IMR-90 (cell line): ENCODE measurements at regions of chr7 and their contacts with region 1.

Region 1: GRCh38 chr7:66140924-66141323 is 26.3 kb downstream of the CRCP start:
- DNase-seq: peak; percentile 84
- ATAC-seq: peak; percentile 72
- H3K4me3 ChIP-seq: no peak overlapping the region
- H3K27ac ChIP-seq: no peak overlapping the region; the same call in 1 of the 2 replicates
- H3K4me1 ChIP-seq: peaks cover 26% of the 10 kb centered on the region
- H3K27me3 ChIP-seq: no peaks in the 10 kb centered on the region
- CTCF ChIP-seq: peak; percentile 79
- POLR2A ChIP-seq: no peak
- RAD21 ChIP-seq: peak; percentile 85

Region 2: GRCh38 chr7:66152371-66153191 is 11.7 kb after region 1 on chr7:
- CTCF ChIA-PET with region 1: no interaction called
- POLR2A ChIA-PET with region 1: no interaction called
- dilution Hi-C with region 1: no loop called
- in situ Hi-C with region 1: no loop called
- intact Hi-C with region 1: no loop called
- DNase-seq: peak; percentile 87
- ATAC-seq: peak; percentile 77
- H3K4me3 ChIP-seq: no peak overlapping the region
- H3K27ac ChIP-seq: peak overlapping the region; percentile 88
- H3K4me1 ChIP-seq: peaks cover 25% of the 10 kb centered on the region
- H3K27me3 ChIP-seq: no peaks in the 10 kb centered on the region
- CTCF ChIP-seq: no peak
- POLR2A ChIP-seq: no peak
- RAD21 ChIP-seq: no peak

Region 3: GRCh38 chr7:66163186-66163610 is 22.3 kb after region 1 on chr7:
- CTCF ChIA-PET with region 1: no interaction called
- POLR2A ChIA-PET with region 1: no interaction called
- dilution Hi-C with region 1: no loop called
- in situ Hi-C with region 1: no loop called
- intact Hi-C with region 1: no loop called
- DNase-seq: no peak
- ATAC-seq: no peak
- H3K4me3 ChIP-seq: no peak overlapping the region
- H3K27ac ChIP-seq: no peak overlapping the region
- H3K4me1 ChIP-seq: peaks cover 6% of the 10 kb centered on the region
- H3K27me3 ChIP-seq: no peaks in the 10 kb centered on the region
- CTCF ChIP-seq: no peak
- POLR2A ChIP-seq: no peak
- RAD21 ChIP-seq: no peak

Region 4: DNA sequence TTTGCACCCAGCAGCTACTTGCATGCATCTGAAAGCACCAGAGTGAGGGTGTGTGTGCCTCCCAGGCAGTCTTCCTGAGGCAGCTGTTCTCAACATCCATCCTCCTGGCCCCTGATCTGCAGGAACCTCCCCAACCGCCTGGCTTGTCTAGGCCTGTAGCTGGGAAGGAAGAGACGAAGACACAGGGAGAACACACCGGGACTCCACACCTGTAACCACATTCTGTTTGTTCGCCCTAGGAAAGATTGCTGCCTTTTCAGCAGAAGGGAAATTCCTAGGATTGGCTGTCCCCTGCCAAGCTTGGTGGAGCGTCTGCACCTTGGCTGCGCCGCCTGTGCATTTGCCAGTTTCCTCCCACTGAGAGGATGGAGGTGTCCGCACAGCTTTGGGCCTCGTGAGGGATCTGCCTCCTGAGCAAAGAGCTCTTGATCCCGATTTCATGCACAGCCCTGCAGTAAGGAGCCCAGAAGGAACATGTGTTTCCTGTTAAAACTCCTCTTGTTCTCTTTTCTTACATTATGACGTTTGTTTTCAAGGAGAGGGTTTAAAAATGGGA is 218.8 kb after region 1 on chr7:
- CTCF ChIA-PET with region 1: no interaction called
- POLR2A ChIA-PET with region 1: no interaction called
- dilution Hi-C with region 1: no loop called
- in situ Hi-C with region 1: no loop called
- intact Hi-C with region 1: loop called (anchors 5 kb)
- DNase-seq: no peak
- ATAC-seq: no peak
- H3K4me3 ChIP-seq: no peak overlapping the region
- H3K27ac ChIP-seq: no peak overlapping the region
- H3K4me1 ChIP-seq: peaks cover 12% of the 10 kb centered on the region
- H3K27me3 ChIP-seq: no peaks in the 10 kb centered on the region
- CTCF ChIP-seq: no peak
- POLR2A ChIP-seq: no peak
- RAD21 ChIP-seq: no peak

Region 5: GRCh38 chr7:66505531-66506451 is 364.9 kb after region 1 on chr7:
- CTCF ChIA-PET with region 1: interaction called, 5 read pairs
- POLR2A ChIA-PET with region 1: no interaction called
- dilution Hi-C with region 1: no loop called
- in situ Hi-C with region 1: no loop called
- intact Hi-C with region 1: loop called (anchors 10 kb)
- DNase-seq: no peak
- ATAC-seq: no peak; the same call in 1 of the 2 replicates
- H3K4me3 ChIP-seq: no peak overlapping the region
- H3K27ac ChIP-seq: no peak overlapping the region
- H3K4me1 ChIP-seq: no peaks in the 10 kb centered on the region
- H3K27me3 ChIP-seq: peaks cover 2% of the 10 kb centered on the region; the same call in 1 of the 2 replicates
- CTCF ChIP-seq: no peak
- POLR2A ChIP-seq: no peak
- RAD21 ChIP-seq: no peak